ENCODE measurements at regions of chr7 and their contacts with region 1.

Region 1: GRCh38 chr7:95723592-95724180 is 48.7 kb upstream of the DYNC1I1 start:
- DNase-seq: peak; percentile 76
- H3K4me3 ChIP-seq: no peak overlapping the region
- H3K27ac ChIP-seq: no peak overlapping the region
- H3K4me1 ChIP-seq: no peaks in the 10 kb centered on the region
- H3K27me3 ChIP-seq: peaks cover 7 to 13% of the 10 kb centered on the region in 2 experiments
- CTCF ChIP-seq: peak; percentile 31 to 32
- POLR2A ChIP-seq: no peak

Region 2: DNA sequence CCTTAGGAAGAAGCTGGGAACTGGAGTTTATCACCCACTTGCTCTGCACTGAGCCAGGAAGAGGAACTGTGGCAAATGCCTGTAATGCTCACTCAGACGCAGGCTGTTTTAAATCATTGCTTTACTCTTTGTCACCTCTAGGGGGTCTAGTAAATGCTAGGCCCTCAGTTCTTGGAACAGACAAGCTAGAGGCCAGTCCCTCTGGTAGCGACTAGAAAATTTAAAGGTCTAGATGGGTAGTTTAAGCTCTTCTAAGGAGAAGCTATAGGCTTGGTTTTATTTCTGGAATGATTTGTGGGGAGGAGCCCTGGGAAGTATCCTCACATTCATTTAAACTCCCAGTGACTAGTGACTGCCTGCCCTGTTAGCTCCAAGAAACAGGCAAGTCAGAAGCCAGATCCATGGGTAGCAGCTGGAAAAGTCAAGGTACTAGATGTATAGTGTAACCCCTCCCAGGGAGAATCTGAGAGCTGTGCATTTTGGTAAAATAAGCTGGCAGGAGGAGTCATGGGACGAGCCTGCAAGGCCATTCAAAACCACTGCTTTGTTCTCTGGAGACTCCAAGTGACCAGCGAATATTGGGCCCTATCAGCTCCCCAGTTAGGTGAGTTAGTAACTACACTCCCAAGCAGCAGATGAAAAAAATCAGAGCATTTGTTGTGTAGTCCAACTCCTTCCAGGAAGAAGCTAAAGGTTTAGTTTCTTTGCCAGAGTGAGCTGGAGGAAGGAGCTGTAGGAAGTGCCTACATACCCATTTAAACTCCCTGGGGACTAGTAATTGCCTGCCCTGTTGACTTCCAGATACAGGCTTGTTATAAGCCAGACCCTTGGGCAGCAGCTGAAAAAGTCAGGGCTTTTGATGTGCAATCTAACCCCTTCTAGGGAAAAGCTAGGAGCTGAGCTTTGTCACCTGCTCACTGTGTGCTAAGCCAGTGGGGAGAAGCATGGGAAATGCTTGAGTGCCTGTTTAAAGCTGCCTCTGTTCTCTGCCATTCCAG is 117.6 kb after region 1 on chr7:
- CTCF ChIA-PET with region 1: interaction called, 13 read pairs
- POLR2A ChIA-PET with region 1: interaction called, 9 read pairs
- dilution Hi-C with region 1: no loop called
- intact Hi-C with region 1: no loop called
- DNase-seq: no peak
- H3K4me3 ChIP-seq: no peak overlapping the region
- H3K27ac ChIP-seq: no peak overlapping the region
- H3K4me1 ChIP-seq: no peaks in the 10 kb centered on the region
- H3K27me3 ChIP-seq: no peaks in the 10 kb centered on the region
- CTCF ChIP-seq: peak; percentile 19 to 31
- POLR2A ChIP-seq: no peak

Region 3: GRCh38 chr7:95910341-95910740 is 186.7 kb after region 1 on chr7:
- CTCF ChIA-PET with region 1: interaction called, 12 read pairs
- POLR2A ChIA-PET with region 1: no interaction called
- dilution Hi-C with region 1: no loop called
- intact Hi-C with region 1: no loop called
- DNase-seq: no peak
- H3K4me3 ChIP-seq: no peak overlapping the region
- H3K27ac ChIP-seq: no peak overlapping the region
- H3K4me1 ChIP-seq: no peaks in the 10 kb centered on the region
- H3K27me3 ChIP-seq: peaks cover 7 to 13% of the 10 kb centered on the region in 2 experiments
- CTCF ChIP-seq: no peak
- POLR2A ChIP-seq: no peak